GM18951 (cell line): ENCODE measurements at regions of chr17 and their contacts with region 1.

Region 1: GRCh38 chr17:75331671-75332070 is 42.4 kb upstream of the SLC25A19 start:
- POLR2A ChIP-seq: no peak

Region 2: GRCh38 chr17:75398279-75398678 is 66.6 kb after region 1 on chr17:
- in situ Hi-C with region 1: loop called (anchors 5 kb)
- POLR2A ChIP-seq: no peak